Pancreas (tissue), 10 donors: ENCODE measurements at regions of chr11 and their contacts with region 1.

Region 1: GRCh38 chr11:10735481-10736475 is 15.3 kb upstream of the CTR9 start:
- DNase-seq: peak; percentile 82 to 97 (median 91)
- ATAC-seq: peak; percentile 99 to 100 (median 100)
- H3K4me3 ChIP-seq: peak overlapping the region in 1 of 4 donors; percentile 2
- H3K27ac ChIP-seq: no peak overlapping the region
- H3K4me1 ChIP-seq: no peaks in the 10 kb centered on the region
- H3K27me3 ChIP-seq: no peaks in the 10 kb centered on the region
- CTCF ChIP-seq: peak; percentile 93 to 99 (median 95)

Region 2: GRCh38 chr11:9972989-9973388 is 762.8 kb before region 1 on chr11:
- intact Hi-C with region 1: loop called in 1 of 3 experiments (anchors 10 kb)
- DNase-seq: peak in 2 of 6 donors; percentile 6 to 32
- ATAC-seq: peak in 3 of 4 donors; percentile 85 to 88 (median 87)
- H3K4me3 ChIP-seq: no peak overlapping the region
- H3K27ac ChIP-seq: no peak overlapping the region
- H3K4me1 ChIP-seq: no peaks in the 10 kb centered on the region
- H3K27me3 ChIP-seq: no peaks in the 10 kb centered on the region
- CTCF ChIP-seq: peak; percentile 17 to 46 (median 42)

Region 3: GRCh38 chr11:10400856-10401255 is 334.9 kb before region 1 on chr11:
- intact Hi-C with region 1: loop called in 2 of 3 experiments (anchors 5 to 10 kb)
- DNase-seq: no peak
- ATAC-seq: peak in 2 of 4 donors; percentile 42 to 60
- H3K4me3 ChIP-seq: no peak overlapping the region
- H3K27ac ChIP-seq: no peak overlapping the region
- H3K4me1 ChIP-seq: no peaks in the 10 kb centered on the region
- H3K27me3 ChIP-seq: no peaks in the 10 kb centered on the region
- CTCF ChIP-seq: no peak

Region 4: GRCh38 chr11:10405855-10406592 is 329.8 kb before region 1 on chr11:
- intact Hi-C with region 1: loop called in 2 of 3 experiments (anchors 5 to 10 kb)
- DNase-seq: peak in 4 of 6 donors; percentile 40 to 73 (median 60)
- ATAC-seq: peak; percentile 76 to 99 (median 97)
- H3K4me3 ChIP-seq: no peak overlapping the region
- H3K27ac ChIP-seq: no peak overlapping the region
- H3K4me1 ChIP-seq: no peaks in the 10 kb centered on the region
- H3K27me3 ChIP-seq: no peaks in the 10 kb centered on the region
- CTCF ChIP-seq: peak; percentile 16 to 55 (median 38)

Region 5: GRCh38 chr11:10844356-10844755 is 108.6 kb after region 1 on chr11:
- intact Hi-C with region 1: no loop called
- DNase-seq: no peak
- ATAC-seq: no peak
- H3K4me3 ChIP-seq: no peak overlapping the region
- H3K27ac ChIP-seq: no peak overlapping the region
- H3K4me1 ChIP-seq: peaks cover 0 to 7% (median 0%) of the 10 kb centered on the region in 3 donors
- H3K27me3 ChIP-seq: no peaks in the 10 kb centered on the region
- CTCF ChIP-seq: no peak